OCI-LY7 (cell line): ENCODE measurements at regions of chr5 and their contacts with region 1.

Region 1: DNA sequence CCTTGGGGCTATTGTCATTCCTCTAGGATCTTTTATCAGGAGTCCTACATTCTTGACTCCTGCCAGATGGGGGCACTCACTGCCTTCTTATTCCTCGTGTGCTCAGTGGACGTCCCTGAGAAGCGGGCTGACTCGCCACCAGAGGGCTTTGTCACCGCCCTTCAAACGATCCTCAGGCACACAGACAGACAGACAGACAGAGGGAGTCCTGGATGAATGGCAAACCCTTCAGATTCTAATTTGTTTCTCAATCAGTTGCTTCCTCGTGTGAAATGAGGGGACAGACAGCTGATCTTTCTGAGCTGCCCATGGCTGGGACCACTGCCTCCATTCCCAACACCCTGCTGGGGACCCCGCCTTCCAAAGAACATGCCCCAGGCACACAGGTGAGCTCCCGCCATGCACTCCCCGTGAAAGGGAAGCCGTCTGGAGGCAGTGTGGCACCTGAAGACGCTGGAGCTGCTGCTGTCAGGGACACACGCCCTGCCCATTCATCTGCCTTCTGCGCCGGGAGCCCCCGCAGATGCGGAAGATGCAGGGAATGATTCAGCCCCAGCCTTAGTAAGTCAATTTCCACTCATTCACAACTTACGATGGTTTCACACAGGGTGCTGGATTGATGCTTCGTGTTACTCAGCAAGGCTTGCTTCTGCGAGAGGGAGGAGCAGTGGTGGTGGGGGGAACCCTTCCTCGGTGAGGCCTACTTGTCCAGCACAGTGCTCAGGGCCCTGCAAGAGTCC is 24.9 kb upstream of the SH3PXD2B start:
- DNase-seq: peak; percentile 75
- H3K4me3 ChIP-seq: no peak overlapping the region
- H3K27ac ChIP-seq: no peak overlapping the region
- H3K4me1 ChIP-seq: no peaks in the 10 kb centered on the region
- CTCF ChIP-seq: peak; percentile 81

Region 2: GRCh38 chr5:172697123-172698121 is 218.2 kb after region 1 on chr5:
- CTCF ChIA-PET with region 1: interaction called, 3 read pairs
- POLR2A ChIA-PET with region 1: no interaction called
- intact Hi-C with region 1: loop called (anchors 1 kb)
- DNase-seq: peak; percentile 87
- H3K4me3 ChIP-seq: peak overlapping the region; percentile 67
- H3K27ac ChIP-seq: no peak overlapping the region
- H3K4me1 ChIP-seq: peaks cover 7% of the 10 kb centered on the region
- CTCF ChIP-seq: peak; percentile 89

Region 3: DNA sequence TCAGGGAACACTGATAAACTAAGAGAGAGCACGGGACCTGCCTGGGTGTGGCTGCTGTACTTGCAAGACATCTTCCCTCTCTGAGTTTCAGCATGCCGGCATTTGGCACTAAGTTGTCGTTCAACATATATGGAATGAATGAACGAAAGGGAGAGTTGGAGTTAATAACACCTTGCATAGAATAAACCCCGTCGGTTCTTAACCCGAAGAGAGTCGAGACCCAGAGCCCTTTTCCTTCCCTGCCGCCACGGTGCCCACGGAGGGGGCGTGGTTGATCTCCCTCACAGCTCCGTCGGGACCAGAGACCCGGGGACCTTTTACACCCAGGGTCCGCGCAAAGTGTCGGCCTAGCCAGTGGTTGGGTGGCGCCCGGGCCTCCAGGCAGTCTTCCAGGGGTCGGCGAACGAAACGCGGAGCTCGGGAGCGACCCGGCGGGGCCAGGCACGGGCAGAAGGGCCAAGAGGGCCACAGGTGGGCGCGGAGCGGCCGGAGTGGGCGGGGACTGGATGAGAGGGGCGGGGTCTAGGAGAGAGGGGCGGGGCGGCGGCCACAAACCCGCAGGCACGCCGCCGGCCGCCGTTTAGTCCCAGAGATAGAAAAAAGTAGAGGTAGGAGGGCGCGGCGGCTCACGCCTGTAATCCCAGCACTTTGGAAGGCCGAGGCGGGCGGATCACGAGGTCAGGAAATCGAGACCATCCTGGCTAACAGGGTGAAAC is 479.3 kb after region 1 on chr5:
- CTCF ChIA-PET with region 1: no interaction called
- POLR2A ChIA-PET with region 1: no interaction called
- intact Hi-C with region 1: loop called (anchors 10 kb)
- DNase-seq: peak; percentile 67
- H3K4me3 ChIP-seq: peak overlapping the region; percentile 88
- H3K27ac ChIP-seq: peak overlapping the region; percentile 19
- H3K4me1 ChIP-seq: peaks cover 13% of the 10 kb centered on the region
- CTCF ChIP-seq: no peak